ENCODE measurements at regions of chr12 and their contacts with region 1.

Region 1: DNA sequence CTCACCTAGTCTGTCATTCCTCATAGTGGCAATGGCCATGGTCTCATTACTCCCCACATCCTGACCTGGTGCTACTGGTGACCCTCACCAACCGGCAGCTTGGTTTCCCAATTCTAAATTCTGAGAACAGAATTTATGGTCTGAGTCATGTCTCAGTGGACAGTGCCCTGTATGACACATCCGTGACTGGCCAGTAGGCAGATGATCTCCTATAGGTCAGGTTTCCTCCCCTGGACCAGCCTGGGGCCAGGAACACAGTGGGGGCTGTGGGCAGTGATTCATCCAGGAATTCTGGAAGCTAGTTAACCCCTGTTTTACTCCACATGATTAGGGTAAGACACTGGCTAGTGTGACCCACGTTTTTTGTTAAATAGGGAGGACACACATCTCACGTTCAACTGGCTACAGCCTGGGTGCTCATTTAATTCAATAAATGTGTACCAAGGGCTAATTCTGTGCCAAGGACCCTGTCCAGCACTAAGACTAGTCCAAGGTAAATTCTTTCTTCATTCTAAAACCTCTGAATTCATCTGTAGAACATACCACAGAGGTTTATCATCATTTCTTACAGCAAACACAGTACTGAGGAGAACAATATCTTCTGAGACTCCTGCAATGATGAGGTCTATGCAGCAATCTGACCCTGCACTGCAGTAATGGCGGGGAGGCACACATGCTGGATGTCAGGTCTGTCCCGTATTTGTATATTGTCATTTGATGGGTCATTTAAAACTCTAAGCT is 249.6 kb upstream of the TBX3 start:
- DNase-seq: no peak
- H3K4me3 ChIP-seq: no peak overlapping the region
- H3K27ac ChIP-seq: no peak overlapping the region
- H3K4me1 ChIP-seq: no peaks in the 10 kb centered on the region
- H3K27me3 ChIP-seq: no peaks in the 10 kb centered on the region
- CTCF ChIP-seq: no peak
- EP300 ChIP-seq: no peak
- POLR2A ChIP-seq: no peak
- RAD21 ChIP-seq: no peak

Region 2: GRCh38 chr12:114611145-114612018 is 322.2 kb before region 1 on chr12:
- CTCF ChIA-PET with region 1: no interaction called
- POLR2A ChIA-PET with region 1: no interaction called
- DNase-seq: no peak
- H3K4me3 ChIP-seq: no peak overlapping the region
- H3K27ac ChIP-seq: no peak overlapping the region
- H3K4me1 ChIP-seq: no peaks in the 10 kb centered on the region
- H3K27me3 ChIP-seq: no peaks in the 10 kb centered on the region
- CTCF ChIP-seq: no peak
- EP300 ChIP-seq: no peak
- POLR2A ChIP-seq: no peak
- RAD21 ChIP-seq: no peak

Region 3: DNA sequence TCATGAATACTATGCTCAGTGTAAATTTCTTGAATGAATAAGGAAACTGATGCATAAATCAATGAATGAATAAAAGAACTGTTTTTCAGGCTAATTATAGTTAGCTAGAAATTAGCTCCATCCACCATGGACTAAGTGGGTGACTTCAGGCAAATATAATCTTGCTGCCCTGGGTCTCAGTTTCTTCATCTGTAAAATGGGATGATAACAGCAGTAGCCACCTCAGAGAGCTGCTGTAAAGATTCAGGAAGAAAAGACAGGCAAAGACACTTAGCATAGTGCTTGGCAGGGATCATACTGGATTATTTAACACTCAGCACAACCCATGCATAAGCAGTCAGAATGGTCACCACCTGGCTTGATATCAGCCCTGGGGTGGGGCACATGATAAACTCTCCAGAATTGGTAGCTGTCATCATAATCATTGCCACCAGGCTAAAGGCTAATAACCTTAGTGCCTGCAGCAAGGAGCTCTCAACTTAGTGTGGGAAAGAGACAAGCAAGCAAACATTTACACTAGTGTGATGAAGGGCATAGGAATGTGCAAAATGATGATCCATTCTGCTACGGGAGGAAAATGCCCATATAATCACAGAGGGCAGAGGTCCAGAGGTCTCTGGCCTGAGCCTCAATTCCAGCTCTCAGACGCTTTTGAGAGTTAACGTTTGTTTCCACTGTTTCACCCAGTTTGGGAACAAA is 14.9 kb before region 1 on chr12:
- CTCF ChIA-PET with region 1: interaction called, 12 read pairs
- POLR2A ChIA-PET with region 1: no interaction called
- DNase-seq: no peak
- H3K4me3 ChIP-seq: no peak overlapping the region
- H3K27ac ChIP-seq: no peak overlapping the region
- H3K4me1 ChIP-seq: no peaks in the 10 kb centered on the region
- H3K27me3 ChIP-seq: no peaks in the 10 kb centered on the region
- CTCF ChIP-seq: no peak
- EP300 ChIP-seq: no peak
- POLR2A ChIP-seq: no peak
- RAD21 ChIP-seq: no peak

Region 4: DNA sequence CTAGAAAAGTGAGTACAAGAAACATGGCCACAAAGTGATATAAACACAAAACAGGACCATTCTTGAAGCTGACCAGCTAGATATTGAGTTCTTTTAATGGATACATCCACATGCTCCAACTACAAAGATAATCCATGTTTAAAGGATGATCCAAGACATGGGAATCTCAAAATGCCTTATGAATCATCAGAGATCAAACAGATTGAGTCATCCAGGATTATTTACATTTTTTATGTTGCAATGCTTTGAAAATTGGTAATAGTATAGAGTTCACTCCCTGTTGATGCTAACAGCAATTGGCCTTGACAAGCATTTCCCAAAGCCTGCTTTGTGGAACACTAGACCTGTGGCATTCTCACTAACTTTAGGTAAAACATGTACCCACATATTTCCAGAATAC is 43.4 kb after region 1 on chr12:
- CTCF ChIA-PET with region 1: no interaction called
- POLR2A ChIA-PET with region 1: no interaction called
- DNase-seq: no peak
- H3K4me3 ChIP-seq: no peak overlapping the region
- H3K27ac ChIP-seq: no peak overlapping the region
- H3K4me1 ChIP-seq: no peaks in the 10 kb centered on the region
- H3K27me3 ChIP-seq: no peaks in the 10 kb centered on the region
- CTCF ChIP-seq: no peak
- EP300 ChIP-seq: no peak
- POLR2A ChIP-seq: no peak
- RAD21 ChIP-seq: no peak